Natural killer cell (primary cell): ENCODE measurements at regions of chr3 and their contacts with region 1.

Region 1: DNA sequence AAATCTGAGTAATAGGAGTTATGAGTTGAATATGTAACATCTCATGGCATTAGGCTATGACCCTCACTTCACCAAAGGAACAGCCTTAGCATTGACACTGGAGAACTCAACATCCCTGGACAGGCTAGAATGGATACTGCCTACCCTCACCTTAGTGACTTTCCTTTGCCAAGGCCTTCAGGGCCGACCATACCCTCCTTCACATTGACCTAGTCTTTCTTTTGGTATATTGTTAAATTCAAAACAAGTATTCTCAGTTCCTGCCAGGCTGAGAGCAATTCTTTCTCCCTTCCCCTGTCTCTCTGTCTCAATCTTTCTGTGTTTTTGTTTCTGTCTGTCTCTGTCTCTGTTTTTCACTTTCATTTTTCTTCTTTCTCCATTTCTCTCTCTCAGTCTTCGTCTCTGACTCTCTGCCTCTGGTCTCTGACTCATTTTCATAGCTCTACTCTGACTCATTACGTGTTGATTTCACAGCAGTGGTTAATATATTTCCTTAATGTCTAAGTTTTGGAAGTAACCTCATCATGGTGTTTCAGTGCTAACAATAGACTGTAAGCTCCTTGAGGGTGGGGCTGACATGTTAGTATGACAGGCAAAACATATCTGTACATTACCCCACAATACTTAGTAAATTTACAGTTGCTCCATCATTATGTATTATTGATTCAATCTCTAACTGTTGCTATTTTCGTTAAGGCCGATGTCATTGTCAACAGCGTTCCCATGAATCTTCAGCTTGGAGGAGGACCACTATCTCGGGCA is 32.5 kb downstream of the PARP15 start:
- DNase-seq: peak in 1 of 2 donors; percentile 9
- ATAC-seq: peak; percentile 81 to 93 (median 88)
- H3K4me3 ChIP-seq: no peak overlapping the region
- H3K4me3 Mint-ChIP-seq: no peak overlapping the region
- H3K27ac ChIP-seq: peak overlapping the region; percentile 66
- H3K27ac Mint-ChIP-seq: peak overlapping the region; percentile 72 to 90
- H3K4me1 ChIP-seq: peaks cover 2% of the 10 kb centered on the region
- H3K4me1 Mint-ChIP-seq: peaks cover 13 to 22% of the 10 kb centered on the region in 2 donors
- H3K27me3 ChIP-seq: no peaks in the 10 kb centered on the region
- H3K27me3 Mint-ChIP-seq: no peaks in the 10 kb centered on the region
- CTCF ChIP-seq: no peak

Region 2: GRCh38 chr3:122572940-122573412 is 37.0 kb before region 1 on chr3:
- intact Hi-C with region 1: loop called (anchors 2 kb)
- DNase-seq: peak; percentile 41 to 54
- ATAC-seq: peak; percentile 87 to 91 (median 91)
- H3K4me3 ChIP-seq: no peak overlapping the region
- H3K4me3 Mint-ChIP-seq: peak overlapping the region; percentile 62
- H3K27ac ChIP-seq: peak overlapping the region; percentile 62
- H3K27ac Mint-ChIP-seq: peak overlapping the region; percentile 91 to 95
- H3K4me1 ChIP-seq: peaks cover 28% of the 10 kb centered on the region
- H3K4me1 Mint-ChIP-seq: peaks cover 54% of the 10 kb centered on the region in 2 donors
- H3K27me3 ChIP-seq: no peaks in the 10 kb centered on the region
- H3K27me3 Mint-ChIP-seq: no peaks in the 10 kb centered on the region
- CTCF ChIP-seq: no peak

Region 3: DNA sequence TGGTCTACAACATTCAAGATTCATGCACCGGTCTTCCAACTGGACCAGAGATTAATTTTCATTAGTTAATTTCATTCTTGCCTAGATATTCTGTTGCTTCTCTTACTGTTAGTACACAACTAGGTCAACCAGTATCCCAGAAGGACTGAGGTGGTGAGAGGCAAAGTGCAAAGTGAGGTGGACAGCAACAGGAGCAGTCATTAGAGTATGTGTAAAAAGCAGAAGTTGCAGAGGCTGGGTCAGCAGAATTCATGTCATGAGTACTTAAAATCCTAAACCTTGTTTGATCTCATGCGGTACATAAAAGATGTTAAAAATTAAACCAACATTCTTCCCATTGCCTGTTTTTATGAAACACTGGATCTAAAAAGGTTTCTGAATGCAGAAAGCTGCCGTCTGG is 117.3 kb after region 1 on chr3:
- intact Hi-C with region 1: no loop called
- DNase-seq: no peak
- ATAC-seq: no peak
- H3K4me3 ChIP-seq: no peak overlapping the region
- H3K4me3 Mint-ChIP-seq: no peak overlapping the region
- H3K27ac ChIP-seq: no peak overlapping the region
- H3K27ac Mint-ChIP-seq: no peak overlapping the region
- H3K4me1 ChIP-seq: no peaks in the 10 kb centered on the region
- H3K4me1 Mint-ChIP-seq: no peaks in the 10 kb centered on the region
- H3K27me3 ChIP-seq: no peaks in the 10 kb centered on the region
- H3K27me3 Mint-ChIP-seq: no peaks in the 10 kb centered on the region
- CTCF ChIP-seq: no peak